ENCODE measurements at regions of chr5 and their contacts with region 1.

Region 1: GRCh38 chr5:75236322-75237316 is at the start of gene ANKRD31:
- DNase-seq: peak; percentile 43
- ATAC-seq: peak; percentile 98
- H3K4me3 ChIP-seq: peak within 1 kb of the TSS; percentile 72 to 93 (median 91)
- H3K27ac ChIP-seq: peak within 1 kb of the TSS; percentile 45
- H3K4me1 ChIP-seq: peaks cover 12% of the 10 kb centered on the region
- H3K27me3 ChIP-seq: no peaks in the 10 kb centered on the region
- CTCF ChIP-seq: peak; percentile 71
- EP300 ChIP-seq: 0 out of 4 replicates have a peak, but pooled peaks have one; percentile 9
- POLR2A ChIP-seq: peak; percentile 57 to 75
- RAD21 ChIP-seq: peak; percentile 97
- total RNA-seq, gene ANKRD31: 0.08 and 0.09 TPM in 2 replicates

Region 2: DNA sequence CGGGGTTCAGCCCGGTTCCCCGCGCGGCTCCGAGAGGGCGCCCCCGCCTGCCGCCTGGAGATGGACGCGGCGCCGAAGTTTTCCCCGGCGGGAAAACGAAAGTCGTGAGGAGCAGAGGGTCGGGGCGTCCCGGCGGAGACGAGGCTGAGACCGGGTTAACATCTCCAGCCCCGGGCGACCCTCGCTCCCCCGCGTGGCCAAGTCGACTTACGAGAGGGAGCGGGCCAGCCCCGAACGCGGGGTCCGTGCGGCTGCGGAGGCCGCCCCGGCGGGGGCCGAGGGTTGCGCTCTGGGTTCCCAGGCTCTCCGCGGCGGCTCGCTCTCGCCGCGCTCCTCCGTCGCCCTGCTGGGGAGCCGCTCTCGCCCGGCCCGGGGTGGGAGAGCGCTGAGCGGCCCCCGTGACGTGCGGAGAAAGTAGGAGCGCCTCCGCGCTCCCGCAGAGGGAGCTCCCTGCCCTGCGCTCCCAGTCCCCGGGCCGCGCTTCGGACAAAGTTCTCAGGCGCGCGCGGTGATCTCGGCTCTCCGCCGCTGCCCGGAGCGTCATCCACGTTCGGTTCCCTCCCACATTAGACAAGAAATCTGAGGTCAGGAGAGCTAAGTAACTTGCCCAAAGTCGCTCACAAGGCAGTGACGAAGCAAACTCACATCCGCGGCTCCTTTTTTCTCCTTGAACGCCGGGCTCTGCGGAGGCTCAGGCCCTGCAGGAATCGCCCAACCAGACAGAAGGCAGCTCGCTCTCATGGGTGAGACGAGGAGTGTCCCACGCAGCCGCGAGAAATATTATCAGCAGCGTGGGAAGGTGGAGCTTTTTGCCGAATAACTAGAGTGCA is 183.1 kb before region 1 on chr5:
- CTCF ChIA-PET with region 1: no interaction called
- POLR2A ChIA-PET with region 1: interaction called, 3 read pairs
- in situ Hi-C with region 1: no loop called
- intact Hi-C with region 1: loop called (anchors 10 kb)
- DNase-seq: peak; percentile 16
- ATAC-seq: peak; percentile 75
- H3K4me3 ChIP-seq: peak overlapping the region; percentile 54 to 75 (median 68)
- H3K27ac ChIP-seq: no peak overlapping the region
- H3K4me1 ChIP-seq: peaks cover 27% of the 10 kb centered on the region
- H3K27me3 ChIP-seq: peaks cover 19 to 53% of the 10 kb centered on the region in 2 experiments
- CTCF ChIP-seq: peak; percentile 44
- EP300 ChIP-seq: no peak
- POLR2A ChIP-seq: no peak
- RAD21 ChIP-seq: peak; percentile 27; the same call in 1 of the 2 replicates

Region 3: GRCh38 chr5:75260708-75261107 is 24.1 kb after region 1 on chr5:
- CTCF ChIA-PET with region 1: interaction called, 7 read pairs
- POLR2A ChIA-PET with region 1: interaction called, 22 read pairs
- in situ Hi-C with region 1: no loop called
- intact Hi-C with region 1: loop called (anchors 1 kb)
- DNase-seq: peak; percentile 75
- ATAC-seq: peak; percentile 99
- H3K4me3 ChIP-seq: peak overlapping the region in 1 of 3 experiments; percentile 5; a peak in 1 of 6 replicates
- H3K27ac ChIP-seq: no peak overlapping the region
- H3K4me1 ChIP-seq: peaks cover 32% of the 10 kb centered on the region
- H3K27me3 ChIP-seq: no peaks in the 10 kb centered on the region
- CTCF ChIP-seq: no peak
- EP300 ChIP-seq: no peak
- POLR2A ChIP-seq: no peak
- RAD21 ChIP-seq: no peak

Region 4: DNA sequence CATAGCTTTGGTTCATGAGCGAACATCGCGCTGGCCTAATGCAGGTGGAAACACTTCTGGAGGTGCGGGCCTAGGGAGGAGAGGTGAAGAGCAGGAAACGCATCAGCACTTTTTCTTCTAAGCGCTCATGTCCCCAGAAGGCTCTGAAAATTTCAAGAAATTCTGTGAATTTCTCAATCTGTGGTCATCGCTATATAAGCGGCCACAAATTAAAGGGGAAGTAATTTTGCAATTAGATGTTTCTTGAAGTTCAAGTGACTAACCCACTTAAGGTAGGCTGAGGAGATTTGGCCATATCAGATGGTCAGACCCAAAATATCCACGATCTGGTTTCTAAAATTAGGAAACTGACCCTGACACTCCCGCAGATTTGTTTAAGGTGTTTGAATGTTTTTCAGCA is 83.7 kb after region 1 on chr5:
- CTCF ChIA-PET with region 1: no interaction called
- POLR2A ChIA-PET with region 1: no interaction called
- in situ Hi-C with region 1: loop called (anchors 10 kb)
- intact Hi-C with region 1: no loop called
- DNase-seq: no peak
- ATAC-seq: no peak
- H3K4me3 ChIP-seq: no peak overlapping the region; a peak in 1 of 6 replicates
- H3K27ac ChIP-seq: no peak overlapping the region
- H3K4me1 ChIP-seq: peaks cover 45% of the 10 kb centered on the region
- H3K27me3 ChIP-seq: no peaks in the 10 kb centered on the region
- CTCF ChIP-seq: no peak
- EP300 ChIP-seq: no peak
- POLR2A ChIP-seq: no peak
- RAD21 ChIP-seq: no peak

Region 5: GRCh38 chr5:75336625-75337339 is 100.2 kb after region 1 on chr5 and contains the start of gene HMGCR:
- CTCF ChIA-PET with region 1: no interaction called
- POLR2A ChIA-PET with region 1: interaction called, 19 read pairs
- in situ Hi-C with region 1: no loop called
- intact Hi-C with region 1: loop called (anchors 1 kb)
- DNase-seq: peak; percentile 99
- ATAC-seq: peak; percentile 97
- H3K4me3 ChIP-seq: peak within 1 kb of the TSS; percentile 90 to 98 (median 96)
- H3K27ac ChIP-seq: peak within 1 kb of the TSS; percentile 92
- H3K4me1 ChIP-seq: peaks cover 53% of the 10 kb centered on the region
- H3K27me3 ChIP-seq: no peaks in the 10 kb centered on the region; a peak in 1 of 5 replicates
- CTCF ChIP-seq: peak; percentile 89
- EP300 ChIP-seq: peak; percentile 46 to 72; a peak in 3 of 4 replicates
- POLR2A ChIP-seq: peak; percentile 94 to 96
- RAD21 ChIP-seq: peak; percentile 83
- total RNA-seq, gene HMGCR: 111 and 144 TPM in 2 replicates

Region 6: GRCh38 chr5:75524071-75524470 is 287.5 kb after region 1 on chr5:
- CTCF ChIA-PET with region 1: no interaction called
- POLR2A ChIA-PET with region 1: no interaction called
- in situ Hi-C with region 1: no loop called
- intact Hi-C with region 1: loop called (anchors 10 kb)
- DNase-seq: no peak
- ATAC-seq: no peak
- H3K4me3 ChIP-seq: no peak overlapping the region
- H3K27ac ChIP-seq: no peak overlapping the region
- H3K4me1 ChIP-seq: peaks cover 8% of the 10 kb centered on the region
- H3K27me3 ChIP-seq: no peaks in the 10 kb centered on the region
- CTCF ChIP-seq: no peak
- EP300 ChIP-seq: no peak
- POLR2A ChIP-seq: no peak
- RAD21 ChIP-seq: no peak